HepG2 (cell line): ENCODE measurements at regions of chr7 and their contacts with region 1.

Region 1: DNA sequence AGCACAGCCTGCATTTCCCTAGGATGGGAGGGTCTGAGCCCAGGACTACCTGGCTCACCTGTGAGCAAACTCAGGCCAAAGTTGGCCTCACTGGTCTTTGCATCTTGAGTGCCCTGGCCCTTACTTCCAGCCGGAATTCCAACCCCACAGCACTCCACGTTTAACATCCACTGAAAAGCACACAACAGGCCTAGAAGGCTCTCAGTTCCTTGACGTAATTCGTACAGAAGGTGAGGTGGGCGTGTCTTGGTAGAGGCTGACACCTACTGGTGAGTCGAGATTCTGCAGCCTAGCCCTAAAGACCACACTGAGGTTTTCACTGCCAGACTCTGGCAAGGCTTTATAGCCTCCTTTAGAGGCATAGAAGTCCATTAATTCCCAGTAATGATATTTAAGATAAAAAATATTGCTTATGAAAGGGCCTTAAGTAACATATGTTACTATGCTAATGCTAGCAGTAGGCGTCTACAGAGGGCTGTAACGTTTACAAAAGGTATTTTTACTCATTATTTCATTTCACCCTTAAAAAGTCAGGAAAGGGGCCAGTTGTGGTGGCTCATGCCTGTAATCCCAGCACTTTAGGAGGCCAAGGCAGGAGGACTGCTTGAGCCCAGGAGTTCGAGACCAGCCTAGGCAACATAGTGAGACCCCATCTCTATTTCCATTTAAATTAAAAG is 95.8 kb downstream of the HIP1 start:
- DNase-seq: peak; percentile 46
- ATAC-seq: peak; percentile 34; the same call in 1 of the 3 replicates
- H3K4me3 ChIP-seq: no peak overlapping the region
- H3K27ac ChIP-seq: no peak overlapping the region
- H3K4me1 ChIP-seq: peaks cover 15% of the 10 kb centered on the region
- H3K27me3 ChIP-seq: no peaks in the 10 kb centered on the region
- CTCF ChIP-seq: peak; percentile 89
- EP300 ChIP-seq: no peak
- POLR2A ChIP-seq: no peak
- RAD21 ChIP-seq: peak; percentile 55; the same call in 1 of the 2 replicates

Region 2: DNA sequence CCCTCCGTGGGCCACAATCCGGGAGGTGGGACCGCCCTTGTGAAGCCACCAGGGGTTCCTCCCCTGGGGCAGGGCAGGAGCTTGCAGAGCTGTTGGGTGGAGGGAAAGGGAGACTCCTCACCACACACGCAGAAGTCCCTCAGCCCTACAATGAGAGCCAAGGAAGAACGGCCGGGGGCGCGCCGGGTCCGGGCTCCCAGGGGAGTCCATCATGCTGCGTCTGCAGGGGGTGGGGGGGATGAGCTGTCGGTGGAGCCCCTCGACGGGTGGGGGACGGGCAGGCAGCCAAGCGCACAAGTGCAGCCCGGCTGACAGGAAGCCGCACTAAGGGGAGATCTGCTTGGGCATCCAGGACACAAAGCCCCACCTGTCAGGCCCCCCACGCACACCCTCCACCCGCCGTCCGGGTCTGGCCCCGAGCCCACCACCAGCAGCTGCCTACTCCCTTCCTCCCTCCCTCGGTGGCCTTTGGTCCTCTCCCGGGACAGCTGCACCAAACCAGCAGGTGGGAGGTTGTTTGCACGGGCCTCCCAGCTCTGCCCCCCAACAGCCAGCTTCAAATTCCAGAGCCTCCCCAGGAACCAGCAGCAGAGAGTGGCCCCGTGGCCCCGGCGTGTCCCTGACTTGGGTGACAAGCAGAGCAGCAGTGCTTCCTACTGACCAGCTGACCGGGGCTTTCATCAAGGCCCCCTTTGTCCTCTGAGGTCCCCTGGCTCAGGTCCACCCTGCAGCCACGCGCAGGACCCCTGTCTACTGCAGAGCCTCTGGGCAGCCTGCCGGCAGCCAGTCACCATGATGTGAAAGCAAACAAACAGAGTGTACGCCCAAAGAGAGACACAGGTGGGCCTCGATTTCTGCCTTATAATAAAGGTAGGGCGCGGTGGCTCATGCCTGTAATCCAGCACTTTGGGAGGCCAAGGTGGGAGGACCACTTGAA is 45.5 kb after region 1 on chr7:
- CTCF ChIA-PET with region 1: no interaction called
- POLR2A ChIA-PET with region 1: no interaction called
- in situ Hi-C with region 1: no loop called
- intact Hi-C with region 1: loop called (anchors 5 kb)
- DNase-seq: peak; percentile 87
- ATAC-seq: peak; percentile 88
- H3K4me3 ChIP-seq: peak overlapping the region; percentile 32 to 66 (median 49); a peak in 5 of 6 replicates
- H3K27ac ChIP-seq: peak overlapping the region; percentile 70
- H3K4me1 ChIP-seq: peaks cover 58% of the 10 kb centered on the region
- H3K27me3 ChIP-seq: no peaks in the 10 kb centered on the region
- CTCF ChIP-seq: peak; percentile 53; the same call in 1 of the 2 replicates
- EP300 ChIP-seq: peak; percentile 26 to 80; a peak in 2 of 4 replicates
- POLR2A ChIP-seq: peak in 1 of 2 experiments; percentile 57; a peak in 2 of 4 replicates
- RAD21 ChIP-seq: no peak

Region 3: DNA sequence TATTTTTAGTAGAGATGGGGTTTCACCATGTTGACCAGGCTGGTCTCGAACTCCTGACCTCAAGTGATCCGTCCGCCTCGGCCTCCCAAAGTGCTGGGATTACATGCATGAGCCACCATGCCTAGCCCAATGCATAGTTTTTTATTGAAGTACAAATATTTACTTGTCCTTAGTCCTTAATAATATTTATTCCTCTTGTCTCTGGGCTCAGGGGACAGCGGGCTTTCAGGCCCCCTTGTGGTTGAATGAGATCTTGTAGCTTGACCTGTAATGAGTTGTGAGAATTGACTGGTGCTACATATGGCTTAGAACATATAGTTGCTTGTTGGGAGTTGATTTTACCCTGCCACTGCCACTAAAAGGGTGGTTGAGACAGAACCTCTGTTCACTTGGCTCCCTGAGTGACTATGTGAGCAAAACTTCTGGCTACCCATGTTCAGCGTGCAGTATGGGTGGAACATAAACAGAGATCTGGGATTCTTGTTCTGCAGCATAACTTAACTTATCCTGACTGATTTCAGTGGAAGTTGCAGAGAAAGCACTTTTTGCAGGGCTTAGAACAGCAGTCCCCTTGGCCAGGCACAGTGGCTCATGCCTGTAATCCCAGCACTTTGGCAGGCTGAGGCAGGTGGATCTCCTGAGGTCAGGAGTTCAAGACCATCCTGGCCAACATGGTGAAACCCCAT is 114.2 kb after region 1 on chr7:
- CTCF ChIA-PET with region 1: no interaction called
- POLR2A ChIA-PET with region 1: no interaction called
- in situ Hi-C with region 1: no loop called
- intact Hi-C with region 1: loop called (anchors 10 kb)
- DNase-seq: peak; percentile 70
- ATAC-seq: peak; percentile 92
- H3K4me3 ChIP-seq: no peak overlapping the region
- H3K27ac ChIP-seq: no peak overlapping the region
- H3K4me1 ChIP-seq: peaks cover 11% of the 10 kb centered on the region; the same call in 1 of the 2 replicates
- H3K27me3 ChIP-seq: no peaks in the 10 kb centered on the region
- CTCF ChIP-seq: peak; percentile 70
- EP300 ChIP-seq: no peak
- POLR2A ChIP-seq: no peak
- RAD21 ChIP-seq: peak; percentile 35; the same call in 1 of the 2 replicates